ENCODE measurements at regions of chr4 and their contacts with region 1.

Region 1: DNA sequence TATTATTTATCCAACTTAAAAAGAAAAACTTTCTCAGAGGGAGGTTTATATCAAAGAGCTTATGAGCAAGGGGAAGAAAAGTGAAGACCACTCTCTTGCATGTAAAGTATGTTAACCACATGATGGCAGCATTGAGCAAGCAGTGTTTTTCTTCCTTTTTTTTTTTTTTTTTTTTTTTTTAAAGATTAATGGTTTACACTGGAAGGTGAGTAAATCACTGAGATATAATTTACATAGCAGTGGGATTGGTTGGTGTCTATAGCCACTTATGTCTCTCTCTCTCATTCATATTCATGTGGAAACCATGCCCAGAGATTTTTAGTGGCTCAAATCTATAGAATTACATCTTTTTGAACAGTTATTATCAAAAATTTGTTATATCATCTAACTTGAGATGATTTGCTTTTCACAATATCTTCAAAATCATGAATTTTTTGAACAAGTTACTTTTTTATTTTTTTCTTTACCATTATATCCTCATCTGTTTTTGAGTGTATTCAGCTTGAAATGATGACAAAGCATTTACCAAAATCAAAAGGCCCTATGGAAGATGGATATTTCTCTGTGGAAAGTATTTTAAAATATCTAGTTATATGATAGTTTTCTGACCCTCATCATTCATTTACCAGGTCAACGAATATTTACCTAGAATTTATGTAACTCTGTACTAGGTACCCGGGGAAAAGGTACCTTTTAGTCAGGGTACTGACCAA is 31.6 kb downstream of the MTHFD2L start:
- DNase-seq: no peak
- ATAC-seq: peak; percentile 62 to 69
- H3K4me3 ChIP-seq: no peak overlapping the region
- H3K27ac ChIP-seq: no peak overlapping the region
- H3K4me1 ChIP-seq: peaks cover 3% of the 10 kb centered on the region
- H3K27me3 ChIP-seq: no peaks in the 10 kb centered on the region
- CTCF ChIP-seq: peak; percentile 67

Region 2: DNA sequence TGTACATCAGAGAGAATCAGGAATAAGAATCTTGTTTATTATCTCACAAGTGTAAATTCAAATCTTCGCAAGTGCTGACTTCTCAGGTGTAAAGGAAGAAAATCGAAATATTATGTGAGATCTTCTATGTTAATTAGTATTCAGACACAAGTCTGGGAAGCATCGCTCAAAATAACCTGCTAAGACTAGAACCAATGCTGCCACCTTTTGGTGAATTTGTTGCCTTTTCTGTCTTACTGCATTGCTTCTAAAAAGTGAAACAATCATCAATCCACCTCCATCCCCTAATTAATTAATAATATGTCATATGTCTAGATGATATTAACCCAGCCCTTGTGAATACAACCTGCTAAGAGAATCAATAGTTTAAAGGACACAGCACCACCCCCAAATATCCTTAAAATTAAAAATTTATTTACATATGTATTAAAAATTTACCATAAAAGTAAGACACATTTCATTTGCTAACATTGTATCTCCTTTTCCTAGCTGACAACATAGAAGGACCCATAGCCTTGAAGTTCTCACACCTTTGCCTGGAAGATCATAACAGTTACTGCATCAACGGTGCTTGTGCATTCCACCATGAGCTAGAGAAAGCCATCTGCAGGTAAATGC is 122.3 kb after region 1 on chr4:
- intact Hi-C with region 1: loop called (anchors 5 kb)
- DNase-seq: no peak
- ATAC-seq: peak in 1 of 2 donors; percentile 71
- H3K4me3 ChIP-seq: no peak overlapping the region
- H3K27ac ChIP-seq: no peak overlapping the region
- H3K4me1 ChIP-seq: no peaks in the 10 kb centered on the region
- H3K27me3 ChIP-seq: no peaks in the 10 kb centered on the region
- CTCF ChIP-seq: peak; percentile 55

Measured in lower lobe of right lung (tissue), 2 donors.